ENCODE measurements at regions of chr13 and their contacts with region 1.

Region 1: DNA sequence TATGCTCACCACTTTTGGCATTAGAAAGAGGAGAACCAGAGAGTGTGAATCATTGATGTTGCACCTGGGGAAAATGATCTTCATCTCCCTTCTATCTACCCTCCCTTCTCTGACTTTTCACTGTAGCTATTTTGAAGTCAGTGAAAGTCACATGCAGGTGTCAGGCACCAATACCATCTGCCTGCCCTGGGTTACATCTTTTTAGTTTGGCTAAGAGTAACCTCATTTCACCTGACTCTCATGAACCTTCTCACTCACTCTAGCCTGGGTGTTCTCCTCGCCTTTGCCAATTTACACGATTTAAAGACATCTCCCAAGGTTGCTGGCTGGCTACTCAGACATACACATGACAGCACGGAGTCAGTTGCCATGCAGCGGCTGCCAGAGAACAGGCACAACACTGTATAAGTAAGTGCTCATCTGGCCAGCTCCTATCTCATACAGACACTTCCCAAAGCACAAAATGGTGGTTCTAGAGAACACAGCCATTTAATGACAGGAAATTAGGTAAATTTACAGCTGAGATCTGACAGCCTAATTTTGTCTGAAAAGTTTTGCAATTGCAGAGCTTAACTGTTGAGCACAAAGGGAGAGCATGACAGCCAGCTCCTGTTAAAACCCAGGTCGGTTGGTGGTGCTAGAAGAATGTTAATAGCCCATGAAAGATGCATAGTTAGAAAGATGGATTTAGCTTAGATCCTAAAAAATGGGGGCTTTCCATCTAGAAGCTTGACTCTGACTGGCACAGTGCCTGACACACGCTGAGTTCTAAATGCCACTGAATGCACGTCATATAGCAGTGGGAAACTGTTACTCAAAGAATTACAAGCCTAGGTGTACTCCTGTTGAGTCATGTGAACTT is 32.5 kb downstream of the LCP1 start:
- DNase-seq: no peak
- H3K4me3 ChIP-seq: no peak overlapping the region
- H3K27ac ChIP-seq: peak overlapping the region in 1 of 8 donors; percentile 4
- H3K4me1 ChIP-seq: peaks cover 0 to 11% (median 0%) of the 10 kb centered on the region in 6 donors
- H3K27me3 ChIP-seq: no peaks in the 10 kb centered on the region
- CTCF ChIP-seq: no peak
- POLR2A ChIP-seq: no peak

Region 2: DNA sequence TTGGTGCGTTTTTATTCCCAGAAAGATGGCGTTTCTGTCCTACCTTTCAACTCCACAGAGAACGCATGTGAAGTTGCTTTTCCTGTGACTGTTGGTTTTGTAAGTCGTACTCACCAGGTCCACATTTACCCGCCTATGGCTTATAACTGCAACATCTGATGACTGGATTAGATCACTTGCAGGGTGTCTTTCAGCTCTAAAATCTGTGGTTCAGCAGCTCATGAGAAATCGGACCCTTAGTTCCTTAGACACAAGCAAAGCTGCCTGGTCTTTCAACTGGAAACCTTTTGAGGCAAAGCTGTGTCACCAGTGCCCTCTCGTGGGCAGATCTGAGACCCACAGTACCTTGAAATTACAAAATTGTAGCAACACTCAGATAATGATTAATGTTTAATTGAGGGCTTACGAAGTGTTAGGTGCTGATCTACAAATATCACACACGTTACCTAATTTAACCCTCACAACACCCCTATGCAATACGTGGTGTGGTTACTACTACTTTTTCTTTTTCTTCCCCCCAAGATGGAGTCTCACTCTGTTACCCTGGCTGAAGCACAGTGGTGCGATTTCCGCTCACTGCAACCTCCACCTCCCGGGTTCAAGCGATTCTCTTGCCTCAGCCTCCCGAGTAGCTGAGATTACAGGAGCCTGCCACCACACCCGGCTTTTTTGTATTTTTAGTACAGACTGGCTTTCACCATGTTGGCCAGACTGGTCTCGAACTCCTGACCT is 172.2 kb after region 1 on chr13:
- intact Hi-C with region 1: loop called (anchors 10 kb)
- DNase-seq: peak; percentile 83
- H3K4me3 ChIP-seq: peak overlapping the region in 1 of 8 donors; percentile 25
- H3K27ac ChIP-seq: peak overlapping the region in 7 of 8 donors; percentile 5 to 77 (median 58)
- H3K4me1 ChIP-seq: peaks cover 0 to 33% (median 11%) of the 10 kb centered on the region in 6 donors
- H3K27me3 ChIP-seq: no peaks in the 10 kb centered on the region
- CTCF ChIP-seq: peak; percentile 43 to 82 (median 72)
- POLR2A ChIP-seq: no peak

Region 3: DNA sequence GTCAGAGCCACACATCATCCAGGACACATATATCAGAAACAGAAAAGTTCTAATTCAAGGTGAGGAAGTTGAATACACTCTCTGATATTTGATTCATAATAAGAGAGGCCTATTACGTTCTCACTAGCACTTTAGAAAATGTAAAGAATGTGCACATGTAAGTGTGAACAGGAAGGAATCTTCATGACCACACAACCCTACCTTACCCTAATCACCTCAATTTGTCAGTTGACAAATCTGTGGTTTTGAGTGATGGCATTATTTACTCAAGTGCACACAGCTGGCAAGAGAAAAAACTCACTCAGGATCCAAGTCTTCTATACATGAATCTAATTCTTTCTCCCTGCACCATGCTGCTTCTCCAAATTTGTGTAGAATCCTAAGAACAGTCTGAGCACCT is 1405.7 kb after region 1 on chr13:
- intact Hi-C with region 1: no loop called
- DNase-seq: no peak
- H3K4me3 ChIP-seq: no peak overlapping the region
- H3K27ac ChIP-seq: no peak overlapping the region
- H3K4me1 ChIP-seq: no peaks in the 10 kb centered on the region
- H3K27me3 ChIP-seq: no peaks in the 10 kb centered on the region
- CTCF ChIP-seq: no peak
- POLR2A ChIP-seq: no peak